Pancreas (tissue), 10 donors: ENCODE measurements at regions of chr4 and their contacts with region 1.

Region 1: GRCh38 chr4:169619959-169620879 is at the start of gene CLCN3:
- DNase-seq: peak; percentile 98 to 99 (median 98)
- ATAC-seq: peak; percentile 95 to 98 (median 96)
- H3K4me3 ChIP-seq: peak within 1 kb of the TSS; percentile 47 to 56 (median 51)
- H3K27ac ChIP-seq: peak within 1 kb of the TSS; percentile 85 to 98 (median 97)
- H3K4me1 ChIP-seq: peaks cover 5 to 10% (median 8%) of the 10 kb centered on the region in 3 donors
- H3K27me3 ChIP-seq: no peaks in the 10 kb centered on the region
- CTCF ChIP-seq: no peak
- total RNA-seq, gene CLCN3: 24.9 to 41.4 (median 33.6) TPM

Region 2: GRCh38 chr4:170047771-170048354 is 427.6 kb after region 1 on chr4:
- intact Hi-C with region 1: loop called in 1 of 3 experiments (anchors 10 kb)
- DNase-seq: peak in 3 of 6 donors; percentile 16 to 57 (median 57)
- ATAC-seq: peak in 2 of 4 donors; percentile 46 to 62
- H3K4me3 ChIP-seq: no peak overlapping the region
- H3K27ac ChIP-seq: no peak overlapping the region
- H3K4me1 ChIP-seq: no peaks in the 10 kb centered on the region
- H3K27me3 ChIP-seq: no peaks in the 10 kb centered on the region
- CTCF ChIP-seq: peak; percentile 25 to 83 (median 64)